CD8-positive, alpha-beta memory T cell (primary cell): ENCODE measurements at regions of chr1 and their contacts with region 1.

Region 1: GRCh38 chr1:153532769-153533599 is 2.8 kb downstream of the S100A6 start:
- DNase-seq: peak; percentile 66 to 82 (median 70)
- H3K4me3 ChIP-seq: peak overlapping the region; percentile 35
- H3K4me3 Mint-ChIP-seq: peak overlapping the region; percentile 87 to 98 (median 96)
- H3K27ac ChIP-seq: peak overlapping the region; percentile 41
- H3K27ac Mint-ChIP-seq: peak overlapping the region; percentile 94 to 100 (median 96)
- H3K4me1 ChIP-seq: peaks cover 60% of the 10 kb centered on the region
- H3K4me1 Mint-ChIP-seq: peaks cover 61 to 76% (median 68%) of the 10 kb centered on the region in 3 donors
- H3K27me3 ChIP-seq: no peaks in the 10 kb centered on the region
- H3K27me3 Mint-ChIP-seq: peaks cover 0 to 1% of the 10 kb centered on the region in 2 donors

Region 2: GRCh38 chr1:153520230-153520629 is 12.8 kb before region 1 on chr1:
- CTCF ChIA-PET with region 1: interaction called, 27 read pairs
- POLR2A ChIA-PET with region 1: interaction called, 3 read pairs
- DNase-seq: no peak
- H3K4me3 ChIP-seq: no peak overlapping the region
- H3K4me3 Mint-ChIP-seq: no peak overlapping the region
- H3K27ac ChIP-seq: no peak overlapping the region
- H3K27ac Mint-ChIP-seq: peak overlapping the region in 1 of 8 donors; percentile 18
- H3K4me1 ChIP-seq: no peaks in the 10 kb centered on the region
- H3K4me1 Mint-ChIP-seq: peaks cover 5 to 7% (median 7%) of the 10 kb centered on the region in 3 donors
- H3K27me3 ChIP-seq: no peaks in the 10 kb centered on the region
- H3K27me3 Mint-ChIP-seq: peaks cover 0 to 4% of the 10 kb centered on the region in 2 donors

Region 3: DNA sequence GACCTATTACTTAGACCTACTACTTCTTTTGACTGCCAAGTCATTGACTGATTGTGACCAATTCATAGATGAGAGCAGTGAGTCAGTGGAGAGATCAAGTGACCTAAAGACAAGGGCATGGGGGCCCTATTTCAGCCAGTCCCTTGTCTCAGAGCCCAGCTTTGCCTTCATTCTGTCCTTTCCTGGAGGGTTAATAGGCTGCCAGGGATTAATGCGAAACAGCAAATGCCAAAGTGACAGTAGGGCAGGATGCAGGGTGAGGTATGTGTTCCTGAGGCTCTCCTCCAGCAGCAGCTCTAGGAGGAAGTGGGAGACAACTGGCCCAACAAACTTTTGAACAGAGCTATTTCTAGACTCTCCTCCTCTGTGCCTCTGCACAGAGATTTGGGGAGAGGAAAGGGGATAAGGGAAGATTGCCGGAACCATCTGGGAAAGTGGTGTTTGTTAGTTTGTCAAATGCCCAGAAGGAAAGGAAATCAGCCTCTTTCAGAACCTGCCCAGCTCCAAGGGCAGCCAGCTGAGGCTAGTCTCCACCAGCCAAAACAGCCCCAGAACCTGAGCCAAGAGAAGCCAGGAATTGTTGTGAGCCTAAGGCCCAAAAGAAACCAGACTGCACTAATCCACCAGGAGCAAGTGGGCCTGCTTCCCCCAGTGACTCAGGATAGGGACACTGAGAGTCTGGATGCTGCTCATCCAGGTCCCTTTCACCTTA is 21.0 kb after region 1 on chr1:
- CTCF ChIA-PET with region 1: interaction called, 35 read pairs
- POLR2A ChIA-PET with region 1: no interaction called
- DNase-seq: no peak
- H3K4me3 ChIP-seq: no peak overlapping the region
- H3K4me3 Mint-ChIP-seq: no peak overlapping the region
- H3K27ac ChIP-seq: no peak overlapping the region
- H3K27ac Mint-ChIP-seq: peak overlapping the region in 2 of 8 donors; percentile 5 to 17
- H3K4me1 ChIP-seq: no peaks in the 10 kb centered on the region
- H3K4me1 Mint-ChIP-seq: no peaks in the 10 kb centered on the region
- H3K27me3 ChIP-seq: no peaks in the 10 kb centered on the region
- H3K27me3 Mint-ChIP-seq: no peaks in the 10 kb centered on the region

Region 4: DNA sequence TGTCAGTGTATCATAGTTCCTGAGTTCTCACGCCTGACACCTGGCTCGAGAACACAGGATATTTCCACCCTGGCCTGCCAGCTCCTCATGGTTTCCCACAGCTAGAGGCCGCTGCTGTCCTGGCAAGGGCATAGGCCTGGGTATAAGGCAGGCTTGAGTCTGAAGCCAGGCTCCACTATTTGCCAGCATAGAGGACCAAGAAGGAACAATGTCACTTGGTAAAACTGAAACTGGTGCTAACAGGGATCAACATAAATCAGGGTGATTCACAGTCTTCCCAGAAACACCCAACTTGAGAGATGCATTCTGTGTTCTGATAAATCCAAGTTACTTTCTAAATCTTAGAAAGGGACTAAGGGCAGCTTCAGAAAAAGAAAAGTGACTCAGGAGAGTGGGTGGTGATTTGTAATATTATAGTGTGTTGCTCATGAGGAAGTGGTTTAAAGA is 39.6 kb after region 1 on chr1:
- CTCF ChIA-PET with region 1: interaction called, 125 read pairs
- POLR2A ChIA-PET with region 1: interaction called, 6 read pairs
- DNase-seq: peak in 3 of 5 donors; percentile 6 to 59 (median 19)
- H3K4me3 ChIP-seq: no peak overlapping the region
- H3K4me3 Mint-ChIP-seq: no peak overlapping the region
- H3K27ac ChIP-seq: no peak overlapping the region
- H3K27ac Mint-ChIP-seq: peak overlapping the region in 1 of 8 donors; percentile 28
- H3K4me1 ChIP-seq: peaks cover 5% of the 10 kb centered on the region
- H3K4me1 Mint-ChIP-seq: peaks cover 11 to 17% (median 15%) of the 10 kb centered on the region in 3 donors
- H3K27me3 ChIP-seq: no peaks in the 10 kb centered on the region
- H3K27me3 Mint-ChIP-seq: peaks cover 2 to 27% of the 10 kb centered on the region in 2 donors

Region 5: DNA sequence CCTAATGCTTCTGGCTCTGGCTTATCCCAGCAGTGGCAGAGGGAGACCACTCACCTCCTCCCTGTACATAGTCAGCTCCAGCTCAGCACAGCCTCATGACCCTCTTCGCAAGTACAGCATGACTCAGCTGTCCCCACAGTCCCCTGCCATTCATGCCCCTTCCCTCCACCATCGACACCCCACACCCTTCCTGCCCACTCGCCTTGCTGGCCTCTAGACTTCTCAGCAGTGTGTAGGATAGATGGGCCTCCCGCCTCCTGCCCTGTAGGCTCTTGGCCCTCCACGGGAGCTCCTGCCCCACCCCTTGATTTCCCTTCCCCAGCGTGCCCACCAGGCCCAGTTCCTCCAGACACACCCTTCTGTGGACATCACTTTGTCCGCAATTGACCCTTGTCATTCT is 155.3 kb after region 1 on chr1:
- CTCF ChIA-PET with region 1: no interaction called
- POLR2A ChIA-PET with region 1: no interaction called
- DNase-seq: no peak
- H3K4me3 ChIP-seq: no peak overlapping the region
- H3K4me3 Mint-ChIP-seq: no peak overlapping the region
- H3K27ac ChIP-seq: no peak overlapping the region
- H3K27ac Mint-ChIP-seq: no peak overlapping the region
- H3K4me1 ChIP-seq: no peaks in the 10 kb centered on the region
- H3K4me1 Mint-ChIP-seq: peaks cover 0 to 12% (median 9%) of the 10 kb centered on the region in 3 donors
- H3K27me3 ChIP-seq: no peaks in the 10 kb centered on the region
- H3K27me3 Mint-ChIP-seq: peaks cover 15 to 27% of the 10 kb centered on the region in 2 donors

Region 6: DNA sequence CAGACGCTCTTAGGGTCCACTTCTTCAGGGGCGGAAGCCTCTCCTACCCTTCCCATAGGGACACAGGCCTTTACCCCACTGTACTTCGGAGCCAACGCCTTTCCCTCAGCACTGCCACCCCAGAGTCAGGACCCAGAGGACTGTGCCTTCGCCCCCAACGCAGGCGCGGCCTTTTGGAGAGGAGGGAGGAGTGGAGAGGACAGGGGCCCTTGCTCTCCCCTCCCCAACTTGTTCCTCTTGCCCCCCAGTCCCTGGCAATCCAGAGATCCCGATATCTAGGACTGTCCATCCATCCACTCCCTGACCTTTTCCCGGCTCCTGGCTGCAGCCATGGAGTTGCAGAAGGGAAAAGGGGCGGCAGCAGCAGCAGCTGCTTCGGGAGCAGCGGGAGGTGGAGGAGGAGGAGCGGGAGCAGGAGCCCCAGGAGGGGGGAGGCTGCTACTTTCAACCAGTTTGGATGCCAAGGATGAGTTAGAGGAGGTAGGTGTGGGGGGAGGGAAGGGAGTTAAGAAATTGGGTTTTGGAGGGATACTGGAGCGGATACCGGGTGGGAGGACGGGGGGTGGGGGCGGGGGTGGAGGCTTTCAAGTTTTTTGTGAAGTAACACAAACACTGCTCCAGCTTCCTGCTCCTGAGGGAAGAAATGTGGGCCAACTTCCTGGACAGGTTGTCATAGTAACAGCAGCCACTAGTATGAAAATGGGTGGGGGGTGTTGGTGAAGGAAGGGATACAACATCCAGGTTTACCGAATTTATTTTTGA is 195.5 kb after region 1 on chr1:
- CTCF ChIA-PET with region 1: no interaction called
- POLR2A ChIA-PET with region 1: interaction called, 12 read pairs
- DNase-seq: peak in 1 of 5 donors; percentile 7
- H3K4me3 ChIP-seq: peak overlapping the region; percentile 93
- H3K4me3 Mint-ChIP-seq: peak overlapping the region; percentile 83 to 95 (median 91)
- H3K27ac ChIP-seq: peak overlapping the region; percentile 93
- H3K27ac Mint-ChIP-seq: peak overlapping the region; percentile 92 to 100 (median 97)
- H3K4me1 ChIP-seq: peaks cover 22% of the 10 kb centered on the region
- H3K4me1 Mint-ChIP-seq: peaks cover 28 to 35% (median 31%) of the 10 kb centered on the region in 3 donors
- H3K27me3 ChIP-seq: no peaks in the 10 kb centered on the region
- H3K27me3 Mint-ChIP-seq: no peaks in the 10 kb centered on the region